ENCODE measurements at regions of chr3 and their contacts with region 1.

Region 1: DNA sequence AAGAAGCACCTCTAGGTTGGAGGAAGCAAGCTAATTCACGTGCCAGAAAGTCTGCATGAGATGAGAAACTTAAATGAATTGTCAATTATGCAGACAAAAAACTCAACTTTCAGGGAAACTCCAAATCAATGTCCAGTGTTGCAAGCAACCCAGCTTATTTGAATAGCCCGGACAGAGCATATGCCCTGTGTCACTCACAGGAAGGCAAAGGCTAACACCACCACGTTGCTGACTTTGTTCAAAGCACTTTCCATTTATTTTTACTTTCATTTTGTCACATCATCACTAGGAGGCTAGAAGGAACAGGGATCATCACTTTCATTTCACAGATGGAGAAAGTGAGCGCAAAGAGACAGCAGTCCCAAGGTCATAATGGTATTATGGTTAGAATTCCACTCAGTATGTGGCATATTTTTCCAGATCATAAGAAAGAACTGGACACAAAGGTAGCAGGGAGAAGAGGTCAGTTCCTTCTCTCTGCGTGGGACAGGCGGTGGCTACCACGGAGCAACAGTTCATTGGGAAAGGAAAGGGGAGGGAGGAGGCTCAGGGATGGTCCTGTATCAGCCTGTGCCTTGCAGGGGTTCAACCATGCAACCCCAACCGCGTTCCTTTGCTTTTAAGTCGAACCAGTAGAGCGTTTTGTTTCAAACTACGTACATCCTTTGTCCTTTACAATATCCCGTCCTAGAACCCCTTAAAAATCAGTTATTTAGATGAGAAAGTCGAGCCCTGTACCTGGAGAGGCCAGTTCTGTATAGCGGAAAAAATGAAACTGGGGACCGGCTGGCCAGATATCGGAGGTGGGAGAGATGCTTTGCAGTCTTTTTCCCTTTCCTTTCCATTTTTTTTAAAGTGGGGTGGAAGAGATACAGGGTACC is 1.1 kb downstream of the HEG1 start:
- DNase-seq: no peak
- ATAC-seq: peak in 3 of 4 donors; percentile 29 to 59 (median 39)
- H3K4me3 ChIP-seq: peak overlapping the region; percentile 87
- H3K27ac ChIP-seq: peak overlapping the region; percentile 80
- H3K4me1 ChIP-seq: peaks cover 59% of the 10 kb centered on the region
- H3K27me3 ChIP-seq: no peaks in the 10 kb centered on the region
- CTCF ChIP-seq: peak; percentile 4

Region 2: GRCh38 chr3:125003369-125003853 is 51.3 kb before region 1 on chr3:
- intact Hi-C with region 1: loop called in 1 of 2 experiments (anchors 5 kb)
- DNase-seq: peak; percentile 77 to 90
- ATAC-seq: peak; percentile 98 to 100 (median 98)
- H3K4me3 ChIP-seq: peak overlapping the region; percentile 24
- H3K27ac ChIP-seq: peak overlapping the region; percentile 67
- H3K4me1 ChIP-seq: peaks cover 31% of the 10 kb centered on the region
- H3K27me3 ChIP-seq: no peaks in the 10 kb centered on the region
- CTCF ChIP-seq: no peak

Region 3: DNA sequence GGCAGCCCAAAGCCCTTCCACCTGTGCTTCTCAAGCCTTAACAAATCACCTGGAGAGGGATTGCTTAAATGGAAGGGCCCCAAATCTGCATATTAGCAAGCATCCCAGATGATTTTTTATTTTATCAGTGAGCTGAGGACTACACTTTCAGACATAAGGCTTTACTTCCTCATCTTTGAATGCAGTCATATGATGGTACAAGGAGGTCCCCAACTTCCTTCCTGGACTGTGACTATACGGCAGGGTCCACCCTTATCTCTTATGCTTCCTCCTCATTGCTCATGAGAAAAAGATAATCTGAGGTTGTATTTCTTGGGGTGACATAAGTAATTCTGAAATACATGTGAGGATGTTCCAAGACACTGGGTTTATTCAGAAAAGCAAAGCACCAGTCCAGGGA is 14.8 kb after region 1 on chr3:
- intact Hi-C with region 1: no loop called
- DNase-seq: no peak
- ATAC-seq: no peak
- H3K4me3 ChIP-seq: no peak overlapping the region
- H3K27ac ChIP-seq: no peak overlapping the region
- H3K4me1 ChIP-seq: no peaks in the 10 kb centered on the region
- H3K27me3 ChIP-seq: no peaks in the 10 kb centered on the region
- CTCF ChIP-seq: no peak

Region 4: GRCh38 chr3:125141596-125142419 is 87.1 kb after region 1 on chr3:
- intact Hi-C with region 1: loop called in 1 of 2 experiments (anchors 5 kb)
- DNase-seq: peak; percentile 65 to 79
- ATAC-seq: peak; percentile 51 to 78 (median 64)
- H3K4me3 ChIP-seq: peak overlapping the region; percentile 59
- H3K27ac ChIP-seq: peak overlapping the region; percentile 63
- H3K4me1 ChIP-seq: peaks cover 29% of the 10 kb centered on the region
- H3K27me3 ChIP-seq: no peaks in the 10 kb centered on the region
- CTCF ChIP-seq: peak; percentile 22

Region 5: GRCh38 chr3:125165189-125165947 is 110.7 kb after region 1 on chr3:
- intact Hi-C with region 1: loop called in 1 of 2 experiments (anchors 5 kb)
- DNase-seq: peak; percentile 50 to 67
- ATAC-seq: peak; percentile 69 to 86 (median 82)
- H3K4me3 ChIP-seq: no peak overlapping the region
- H3K27ac ChIP-seq: no peak overlapping the region
- H3K4me1 ChIP-seq: no peaks in the 10 kb centered on the region
- H3K27me3 ChIP-seq: no peaks in the 10 kb centered on the region
- CTCF ChIP-seq: peak; percentile 62